CD8-positive, alpha-beta memory T cell (primary cell): ENCODE measurements at regions of chr20 and their contacts with region 1.

Region 1: GRCh38 chr20:51420111-51420510 is 122.4 kb downstream of the NFATC2 start:
- DNase-seq: no peak
- H3K4me3 ChIP-seq: no peak overlapping the region
- H3K4me3 Mint-ChIP-seq: no peak overlapping the region
- H3K27ac ChIP-seq: no peak overlapping the region
- H3K27ac Mint-ChIP-seq: peak overlapping the region; percentile 47 to 100 (median 86)
- H3K4me1 ChIP-seq: peaks cover 63% of the 10 kb centered on the region
- H3K4me1 Mint-ChIP-seq: peaks cover 69 to 98% (median 90%) of the 10 kb centered on the region in 3 donors
- H3K27me3 ChIP-seq: no peaks in the 10 kb centered on the region
- H3K27me3 Mint-ChIP-seq: no peaks in the 10 kb centered on the region

Region 2: GRCh38 chr20:51237278-51237677 is 182.8 kb before region 1 on chr20:
- CTCF ChIA-PET with region 1: no interaction called
- POLR2A ChIA-PET with region 1: no interaction called
- DNase-seq: no peak
- H3K4me3 ChIP-seq: no peak overlapping the region
- H3K4me3 Mint-ChIP-seq: no peak overlapping the region
- H3K27ac ChIP-seq: no peak overlapping the region
- H3K27ac Mint-ChIP-seq: no peak overlapping the region
- H3K4me1 ChIP-seq: no peaks in the 10 kb centered on the region
- H3K4me1 Mint-ChIP-seq: no peaks in the 10 kb centered on the region
- H3K27me3 ChIP-seq: no peaks in the 10 kb centered on the region
- H3K27me3 Mint-ChIP-seq: peaks cover 10 to 49% of the 10 kb centered on the region in 2 donors

Region 3: DNA sequence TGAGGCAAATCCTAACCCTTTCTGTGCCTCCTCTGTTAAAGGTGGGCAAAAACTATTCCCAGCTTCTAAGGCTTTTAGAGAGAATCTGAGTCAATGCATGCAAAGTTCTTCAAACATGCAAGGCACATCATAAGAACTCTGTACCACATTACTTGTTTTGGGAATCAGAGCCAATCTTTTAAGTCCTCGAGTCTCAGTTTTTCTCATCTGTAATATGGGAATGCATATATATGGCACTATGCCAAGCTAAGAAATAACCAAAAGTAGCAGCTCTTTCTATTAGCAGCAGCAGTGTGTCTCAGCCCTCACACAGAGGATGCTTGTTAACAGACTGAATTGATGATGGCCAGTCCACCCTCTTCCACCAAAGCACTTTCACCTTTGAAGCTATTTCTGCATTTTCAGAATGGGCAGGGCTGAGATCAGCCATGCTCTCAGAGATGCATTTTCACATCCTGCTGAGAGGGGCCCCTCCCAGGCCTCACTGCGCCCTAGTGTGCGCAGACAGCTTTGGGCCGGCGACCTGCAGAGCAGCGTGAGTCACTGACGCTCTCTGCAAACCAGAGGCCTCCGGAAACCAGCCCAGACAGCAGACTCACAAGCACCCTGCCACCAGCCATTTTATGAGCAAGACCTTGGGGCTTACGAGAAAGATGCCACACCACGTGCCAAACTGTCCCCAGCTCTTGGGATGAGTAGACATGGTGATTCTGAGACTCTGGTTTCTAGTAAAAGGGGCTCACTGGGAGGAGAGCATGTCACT is 15.6 kb before region 1 on chr20:
- CTCF ChIA-PET with region 1: interaction called, 32 read pairs
- POLR2A ChIA-PET with region 1: interaction called, 17 read pairs
- DNase-seq: peak; percentile 44 to 97 (median 86)
- H3K4me3 ChIP-seq: no peak overlapping the region
- H3K4me3 Mint-ChIP-seq: peak overlapping the region; percentile 2 to 86 (median 79)
- H3K27ac ChIP-seq: peak overlapping the region; percentile 91
- H3K27ac Mint-ChIP-seq: peak overlapping the region; percentile 99 to 100 (median 100)
- H3K4me1 ChIP-seq: peaks cover 90% of the 10 kb centered on the region
- H3K4me1 Mint-ChIP-seq: peaks cover 92 to 98% (median 97%) of the 10 kb centered on the region in 3 donors
- H3K27me3 ChIP-seq: no peaks in the 10 kb centered on the region
- H3K27me3 Mint-ChIP-seq: no peaks in the 10 kb centered on the region